ENCODE measurements at regions of chr19 and their contacts with region 1.

Region 1: GRCh38 chr19:46529622-46530462 is 34.2 kb upstream of the PNMA8B start:
- DNase-seq: peak; percentile 57 to 83 (median 73)
- ATAC-seq: peak; percentile 95
- H3K4me3 ChIP-seq: no peak overlapping the region
- H3K4me3 Mint-ChIP-seq: peak overlapping the region in 4 of 10 donors; percentile 1 to 65 (median 32)
- H3K27ac ChIP-seq: no peak overlapping the region
- H3K27ac Mint-ChIP-seq: peak overlapping the region in 7 of 9 donors; percentile 17 to 89 (median 68)
- H3K4me1 ChIP-seq: peaks cover 8 to 19% of the 10 kb centered on the region in 2 donors
- H3K4me1 Mint-ChIP-seq: peaks cover 15 to 35% (median 23%) of the 10 kb centered on the region in 7 donors
- H3K27me3 ChIP-seq: no peaks in the 10 kb centered on the region
- H3K27me3 Mint-ChIP-seq: no peaks in the 10 kb centered on the region

Region 2: GRCh38 chr19:46542428-46543230 is 12.8 kb after region 1 on chr19:
- CTCF ChIA-PET with region 1: interaction called, 241 read pairs
- POLR2A ChIA-PET with region 1: interaction called, 20 read pairs
- intact Hi-C with region 1: loop called (anchors 1 to 2 kb)
- DNase-seq: peak; percentile 46 to 73 (median 64)
- ATAC-seq: peak; percentile 87
- H3K4me3 ChIP-seq: no peak overlapping the region
- H3K4me3 Mint-ChIP-seq: no peak overlapping the region
- H3K27ac ChIP-seq: no peak overlapping the region
- H3K27ac Mint-ChIP-seq: peak overlapping the region in 2 of 9 donors; percentile 14 to 16
- H3K4me1 ChIP-seq: no peaks in the 10 kb centered on the region
- H3K4me1 Mint-ChIP-seq: peaks cover 2 to 13% (median 5%) of the 10 kb centered on the region in 7 donors
- H3K27me3 ChIP-seq: no peaks in the 10 kb centered on the region
- H3K27me3 Mint-ChIP-seq: peaks cover 0 to 11% (median 0%) of the 10 kb centered on the region in 5 donors

Region 3: GRCh38 chr19:46579361-46579879 is 49.6 kb after region 1 on chr19:
- CTCF ChIA-PET with region 1: no interaction called
- POLR2A ChIA-PET with region 1: no interaction called
- intact Hi-C with region 1: loop called in 1 of 2 experiments (anchors 5 kb)
- DNase-seq: peak in 4 of 9 donors; percentile 16 to 44 (median 23)
- ATAC-seq: no peak
- H3K4me3 ChIP-seq: no peak overlapping the region
- H3K4me3 Mint-ChIP-seq: no peak overlapping the region
- H3K27ac ChIP-seq: no peak overlapping the region
- H3K27ac Mint-ChIP-seq: peak overlapping the region in 3 of 9 donors; percentile 3 to 36 (median 24)
- H3K4me1 ChIP-seq: peaks cover 0 to 4% of the 10 kb centered on the region in 2 donors
- H3K4me1 Mint-ChIP-seq: peaks cover 10 to 53% (median 32%) of the 10 kb centered on the region in 7 donors
- H3K27me3 ChIP-seq: no peaks in the 10 kb centered on the region
- H3K27me3 Mint-ChIP-seq: peaks cover 0 to 26% (median 0%) of the 10 kb centered on the region in 5 donors

Region 4: DNA sequence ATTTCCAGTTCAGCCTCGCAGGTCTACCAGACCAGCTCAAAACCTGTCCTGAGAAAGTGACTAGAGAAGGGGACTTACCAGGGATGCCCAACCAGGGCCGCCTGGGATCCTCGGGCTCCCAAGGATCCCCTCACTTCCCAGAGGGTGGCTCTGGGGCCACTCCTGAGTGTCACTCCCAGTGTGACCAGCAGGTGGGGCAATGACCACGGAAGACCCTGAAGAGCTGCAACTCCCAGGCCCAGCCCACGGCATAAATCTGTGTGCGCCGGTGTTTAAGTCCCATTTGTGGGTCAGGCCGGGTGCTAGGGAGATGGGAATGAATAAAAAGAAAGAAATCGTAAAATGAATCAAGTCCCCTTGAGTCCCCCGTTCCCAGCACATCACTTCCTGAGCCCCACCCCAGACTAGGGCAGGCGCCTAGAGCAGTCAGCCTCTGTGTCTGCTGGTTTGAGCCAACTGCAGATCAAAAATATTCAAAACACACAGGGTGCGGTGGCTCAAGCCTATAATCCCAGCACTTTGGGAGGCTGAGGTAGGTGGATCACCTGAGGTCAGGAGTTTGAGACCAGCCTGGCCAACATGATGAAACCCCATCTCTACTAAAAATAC is 84.4 kb after region 1 on chr19:
- CTCF ChIA-PET with region 1: interaction called, 5 read pairs
- POLR2A ChIA-PET with region 1: interaction called, 4 read pairs
- intact Hi-C with region 1: loop called (anchors 1 to 10 kb)
- DNase-seq: peak in 8 of 9 donors; percentile 70 to 83 (median 77)
- ATAC-seq: peak; percentile 79
- H3K4me3 ChIP-seq: no peak overlapping the region
- H3K4me3 Mint-ChIP-seq: peak overlapping the region; percentile 40 to 77 (median 71)
- H3K27ac ChIP-seq: peak overlapping the region; percentile 65
- H3K27ac Mint-ChIP-seq: peak overlapping the region; percentile 79 to 93 (median 89)
- H3K4me1 ChIP-seq: peaks cover 24 to 84% of the 10 kb centered on the region in 2 donors
- H3K4me1 Mint-ChIP-seq: peaks cover 55 to 85% (median 77%) of the 10 kb centered on the region in 7 donors
- H3K27me3 ChIP-seq: no peaks in the 10 kb centered on the region
- H3K27me3 Mint-ChIP-seq: no peaks in the 10 kb centered on the region

Region 5: GRCh38 chr19:46728693-46729676 is 199.1 kb after region 1 on chr19:
- CTCF ChIA-PET with region 1: interaction called, 4 read pairs
- POLR2A ChIA-PET with region 1: no interaction called
- intact Hi-C with region 1: loop called (anchors 1 kb)
- DNase-seq: peak; percentile 66 to 91 (median 82)
- ATAC-seq: peak; percentile 77
- H3K4me3 ChIP-seq: no peak overlapping the region
- H3K4me3 Mint-ChIP-seq: peak overlapping the region in 1 of 10 donors; percentile 29
- H3K27ac ChIP-seq: no peak overlapping the region
- H3K27ac Mint-ChIP-seq: peak overlapping the region in 6 of 9 donors; percentile 7 to 59 (median 28)
- H3K4me1 ChIP-seq: peaks cover 0 to 5% of the 10 kb centered on the region in 2 donors
- H3K4me1 Mint-ChIP-seq: peaks cover 8 to 32% (median 16%) of the 10 kb centered on the region in 7 donors
- H3K27me3 ChIP-seq: no peaks in the 10 kb centered on the region
- H3K27me3 Mint-ChIP-seq: no peaks in the 10 kb centered on the region

Region 6: GRCh38 chr19:46746281-46747013 is 216.6 kb after region 1 on chr19 and contains the start of gene STRN4:
- CTCF ChIA-PET with region 1: no interaction called
- POLR2A ChIA-PET with region 1: no interaction called
- intact Hi-C with region 1: loop called (anchors 1 kb)
- DNase-seq: peak in 8 of 9 donors; percentile 29 to 65 (median 50)
- ATAC-seq: peak; percentile 87
- H3K4me3 ChIP-seq: peak within 1 kb of the TSS; percentile 73
- H3K4me3 Mint-ChIP-seq: peak within 1 kb of the TSS; percentile 84 to 97 (median 90)
- H3K27ac ChIP-seq: peak within 1 kb of the TSS; percentile 91
- H3K27ac Mint-ChIP-seq: peak within 1 kb of the TSS; percentile 74 to 94 (median 87)
- H3K4me1 ChIP-seq: peaks cover 21 to 26% of the 10 kb centered on the region in 2 donors
- H3K4me1 Mint-ChIP-seq: peaks cover 43 to 64% (median 58%) of the 10 kb centered on the region in 7 donors
- H3K27me3 ChIP-seq: no peaks in the 10 kb centered on the region
- H3K27me3 Mint-ChIP-seq: no peaks in the 10 kb centered on the region
- total RNA-seq, gene STRN4: 81.3 to 120 (median 90.4) TPM